ENCODE measurements at regions of chr18 and their contacts with region 1.

Region 1: GRCh38 chr18:67417864-67418523 is 98.5 kb downstream of the DSEL start:
- DNase-seq: peak; percentile 22
- H3K4me3 Mint-ChIP-seq: peak overlapping the region; percentile 23
- H3K27ac Mint-ChIP-seq: no peak overlapping the region
- H3K4me1 Mint-ChIP-seq: peaks cover 7% of the 10 kb centered on the region
- H3K27me3 Mint-ChIP-seq: no peaks in the 10 kb centered on the region

Region 2: GRCh38 chr18:67359873-67360838 is 57.8 kb before region 1 on chr18:
- CTCF ChIA-PET with region 1: no interaction called
- POLR2A ChIA-PET with region 1: no interaction called
- intact Hi-C with region 1: loop called (anchors 2 kb)
- DNase-seq: peak; percentile 63
- H3K4me3 Mint-ChIP-seq: no peak overlapping the region
- H3K27ac Mint-ChIP-seq: no peak overlapping the region
- H3K4me1 Mint-ChIP-seq: peaks cover 16% of the 10 kb centered on the region
- H3K27me3 Mint-ChIP-seq: peaks cover 1% of the 10 kb centered on the region